Breast epithelium (tissue), 4 donors: ENCODE measurements at regions of chr18 and their contacts with region 1.

Region 1: DNA sequence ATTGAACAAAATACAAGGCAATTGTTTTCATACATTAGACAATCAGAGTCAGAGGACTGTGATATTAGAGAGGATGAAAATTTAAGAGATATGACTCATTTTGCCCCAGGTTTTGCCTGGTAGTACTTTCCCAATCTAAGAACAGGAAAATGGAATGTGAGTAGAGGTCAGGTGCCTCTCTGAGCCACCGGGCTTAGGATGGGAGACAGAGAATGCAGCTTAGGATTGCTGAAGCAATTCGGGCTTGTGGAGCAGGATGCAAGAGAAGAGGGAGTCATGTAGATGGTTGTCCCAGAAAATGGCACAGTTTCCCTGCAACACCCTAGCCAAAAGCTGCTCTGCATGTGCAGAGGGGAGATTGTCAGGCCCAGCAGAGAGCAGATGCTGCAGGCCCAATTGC is 219.8 kb upstream of the CHST9 start:
- DNase-seq: no peak
- H3K4me3 ChIP-seq: no peak overlapping the region
- H3K27ac ChIP-seq: no peak overlapping the region
- H3K4me1 ChIP-seq: no peaks in the 10 kb centered on the region
- H3K27me3 ChIP-seq: no peaks in the 10 kb centered on the region
- CTCF ChIP-seq: no peak
- POLR2A ChIP-seq: no peak

Region 2: DNA sequence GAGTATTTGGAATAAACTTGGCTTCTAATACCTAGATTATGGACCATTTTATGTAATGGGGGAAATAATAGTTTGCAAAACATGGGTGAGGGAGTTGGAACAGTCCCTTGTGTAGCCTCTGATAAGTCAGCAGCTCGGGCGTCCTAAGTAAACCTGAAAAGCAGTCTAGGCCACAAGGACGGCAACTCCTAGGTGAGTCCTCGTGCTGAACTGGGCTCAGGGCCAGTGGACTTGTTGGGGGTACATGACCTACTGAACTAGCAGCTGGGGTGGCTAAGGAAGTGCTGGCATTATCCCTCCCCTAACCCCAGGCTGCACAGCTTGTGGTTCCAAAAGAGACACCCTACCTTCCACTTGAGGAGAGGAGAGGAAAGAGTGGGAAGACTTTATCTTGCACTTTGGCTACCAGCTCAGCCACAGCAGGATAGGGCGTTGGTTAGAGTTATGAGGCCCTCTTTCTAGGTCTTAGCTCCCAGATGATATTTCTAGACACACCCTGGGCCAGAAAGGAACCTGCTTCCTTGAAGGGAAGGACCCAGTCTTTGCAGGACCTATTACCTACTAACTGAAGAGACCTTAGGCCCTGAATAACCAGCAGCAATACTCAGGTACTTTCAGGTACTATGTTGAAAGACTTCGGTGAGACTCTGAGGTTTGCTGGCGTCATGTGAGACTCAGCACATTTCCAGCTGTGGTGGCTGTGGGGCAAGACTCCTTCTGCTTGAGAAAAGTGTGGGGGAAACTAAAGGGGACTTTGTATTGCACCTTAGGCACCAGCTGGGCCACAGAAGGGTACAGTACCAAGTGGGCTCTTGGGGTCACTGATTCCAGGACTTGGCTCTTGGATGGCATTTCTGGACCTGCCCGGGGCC is 610.4 kb before region 1 on chr18:
- intact Hi-C with region 1: loop called (anchors 5 kb)
- DNase-seq: no peak
- H3K4me3 ChIP-seq: no peak overlapping the region
- H3K27ac ChIP-seq: no peak overlapping the region
- H3K4me1 ChIP-seq: no peaks in the 10 kb centered on the region
- H3K27me3 ChIP-seq: no peaks in the 10 kb centered on the region
- CTCF ChIP-seq: no peak
- POLR2A ChIP-seq: no peak